PC-9 (cell line): ENCODE measurements at regions of chr11 and their contacts with region 1.

Region 1: DNA sequence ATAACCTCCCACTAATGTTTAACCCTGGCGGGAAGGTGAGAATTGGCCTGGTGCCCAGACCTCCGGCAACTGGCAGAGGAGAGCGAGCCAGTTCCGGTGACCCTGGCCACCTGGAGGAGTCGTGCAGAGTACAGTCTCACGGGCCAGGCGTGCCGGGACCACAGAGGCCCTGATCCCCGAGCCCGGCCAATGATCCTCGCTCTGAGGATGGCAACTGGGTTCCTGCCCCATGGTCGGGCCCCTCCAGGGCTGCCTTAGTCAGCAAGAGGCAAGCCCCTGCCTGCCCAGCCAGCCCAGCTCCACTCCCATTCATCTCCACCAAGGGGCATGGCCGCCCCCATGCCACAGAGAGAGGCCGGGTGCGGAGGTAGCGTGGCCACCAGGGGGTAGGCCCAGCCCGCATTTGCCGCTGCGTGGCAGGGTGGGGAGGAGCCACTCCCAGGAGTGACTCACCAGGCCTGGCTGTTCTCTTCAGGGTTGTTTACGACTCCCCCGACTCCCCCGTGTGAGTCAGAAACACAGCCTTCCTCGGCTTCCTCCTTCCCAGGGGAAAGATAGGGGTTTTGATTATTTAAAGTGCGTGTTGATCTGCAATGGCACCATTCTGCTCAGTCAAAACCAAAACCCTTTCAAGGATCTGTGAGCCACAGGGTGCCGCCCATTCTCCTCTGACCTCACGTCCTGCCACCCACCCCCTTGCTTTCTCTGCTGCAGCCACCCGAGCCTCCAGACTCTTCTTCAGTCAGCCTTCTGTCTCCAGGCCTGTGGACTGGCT is at the start of gene SLC25A45:
- DNase-seq: peak; percentile 97 to 98
- H3K4me3 ChIP-seq: peak within 1 kb of the TSS; percentile 48; the same call in 1 of the 2 replicates
- H3K27ac ChIP-seq: peak within 1 kb of the TSS; percentile 93
- H3K4me1 ChIP-seq: peaks cover 64% of the 10 kb centered on the region
- H3K27me3 ChIP-seq: no peaks in the 10 kb centered on the region
- CTCF ChIP-seq: peak; percentile 79
- total RNA-seq, gene SLC25A45: 9.5 and 9.8 TPM in 2 replicates

Region 2: DNA sequence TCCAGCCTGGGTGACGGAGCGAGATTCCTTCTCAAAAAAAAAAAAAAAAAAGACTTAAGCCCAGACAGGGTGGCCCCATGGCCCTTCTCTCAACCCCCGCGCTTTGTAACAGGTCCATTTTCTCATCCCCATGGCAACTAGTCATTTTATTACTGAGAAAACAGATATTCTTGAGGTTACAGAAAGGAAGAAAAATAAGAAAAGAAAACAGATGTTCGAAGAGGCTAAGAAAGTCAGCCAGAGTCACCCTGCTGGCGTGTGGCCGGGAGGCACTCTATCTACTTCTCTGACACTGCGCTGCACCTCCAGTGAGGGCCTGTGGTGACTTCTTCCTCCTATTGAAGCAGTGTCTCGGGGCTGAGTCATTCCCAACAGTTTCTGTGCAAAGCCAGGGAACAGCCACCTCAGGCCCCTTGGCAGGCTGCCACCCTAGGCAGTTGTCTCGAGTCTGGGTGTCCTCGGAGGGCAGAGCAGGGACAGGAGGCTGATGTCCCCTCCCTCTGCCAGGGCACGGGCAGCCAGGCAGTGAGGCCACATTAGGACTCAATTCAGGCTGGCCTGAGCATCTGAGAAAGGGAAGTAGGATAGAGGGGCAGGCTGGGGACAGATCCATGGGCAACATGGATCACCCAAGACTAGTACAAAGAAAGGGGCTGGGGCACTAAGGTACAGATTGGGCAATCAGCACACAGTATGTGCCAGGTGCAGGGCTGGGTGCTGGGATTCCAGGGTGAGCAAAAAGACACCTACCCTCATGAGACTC is 231.5 kb before region 1 on chr11:
- CTCF ChIA-PET with region 1: no interaction called
- POLR2A ChIA-PET with region 1: no interaction called
- intact Hi-C with region 1: no loop called
- DNase-seq: peak; percentile 99 to 100
- H3K4me3 ChIP-seq: peak overlapping the region; percentile 18; the same call in 1 of the 2 replicates
- H3K27ac ChIP-seq: peak overlapping the region; percentile 88
- H3K4me1 ChIP-seq: peaks cover 40% of the 10 kb centered on the region
- H3K27me3 ChIP-seq: no peaks in the 10 kb centered on the region
- CTCF ChIP-seq: no peak; the same call in 1 of the 2 replicates

Region 3: DNA sequence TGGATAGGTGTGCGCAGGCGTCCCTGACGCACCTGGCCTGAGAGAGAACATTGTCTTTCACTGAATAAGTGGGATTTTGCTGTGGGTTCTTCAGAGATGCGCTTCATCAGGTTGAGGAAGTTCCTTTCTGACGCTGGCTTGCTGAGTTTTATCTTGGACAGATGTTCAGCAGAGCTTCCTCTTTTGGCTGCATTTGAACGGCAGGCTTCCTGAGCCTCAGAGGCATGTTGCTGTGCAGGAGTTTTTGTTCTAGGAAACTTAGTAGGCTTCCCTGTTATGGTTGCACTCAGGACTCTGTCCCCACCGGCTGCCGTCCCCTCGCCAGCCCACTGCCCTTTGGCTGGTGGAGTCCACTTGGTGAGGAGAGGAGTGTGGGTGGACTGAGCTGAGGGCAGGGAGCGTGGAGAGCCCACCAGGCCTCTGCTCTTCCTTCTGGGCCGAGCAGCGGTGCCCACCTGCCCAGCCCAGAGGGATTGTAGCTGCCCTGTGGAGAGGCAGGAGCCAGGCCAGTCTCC is 21.4 kb after region 1 on chr11:
- CTCF ChIA-PET with region 1: no interaction called
- POLR2A ChIA-PET with region 1: interaction called, 18 read pairs
- intact Hi-C with region 1: no loop called
- DNase-seq: no peak
- H3K4me3 ChIP-seq: no peak overlapping the region
- H3K27ac ChIP-seq: no peak overlapping the region
- H3K4me1 ChIP-seq: no peaks in the 10 kb centered on the region
- H3K27me3 ChIP-seq: no peaks in the 10 kb centered on the region
- CTCF ChIP-seq: no peak

Region 4: GRCh38 chr11:65558002-65558931 is 176.0 kb after region 1 on chr11 and contains the start of gene LTBP3:
- CTCF ChIA-PET with region 1: interaction called, 5 read pairs
- POLR2A ChIA-PET with region 1: interaction called, 43 read pairs
- intact Hi-C with region 1: no loop called
- DNase-seq: peak; percentile 71 to 92
- H3K4me3 ChIP-seq: peak within 1 kb of the TSS; percentile 77
- H3K27ac ChIP-seq: peak within 1 kb of the TSS; percentile 69
- H3K4me1 ChIP-seq: peaks cover 71% of the 10 kb centered on the region
- H3K27me3 ChIP-seq: no peaks in the 10 kb centered on the region
- CTCF ChIP-seq: no peak
- total RNA-seq, gene LTBP3: 455 and 553 TPM in 2 replicates